RWPE1 (cell line): ENCODE measurements at regions of chr1 and their contacts with region 1.

Region 1: GRCh38 chr1:213110349-213111300 is 59.6 kb downstream of the RPS6KC1 start:
- DNase-seq: no peak
- H3K27ac ChIP-seq: no peak overlapping the region
- CTCF ChIP-seq: no peak

Region 2: DNA sequence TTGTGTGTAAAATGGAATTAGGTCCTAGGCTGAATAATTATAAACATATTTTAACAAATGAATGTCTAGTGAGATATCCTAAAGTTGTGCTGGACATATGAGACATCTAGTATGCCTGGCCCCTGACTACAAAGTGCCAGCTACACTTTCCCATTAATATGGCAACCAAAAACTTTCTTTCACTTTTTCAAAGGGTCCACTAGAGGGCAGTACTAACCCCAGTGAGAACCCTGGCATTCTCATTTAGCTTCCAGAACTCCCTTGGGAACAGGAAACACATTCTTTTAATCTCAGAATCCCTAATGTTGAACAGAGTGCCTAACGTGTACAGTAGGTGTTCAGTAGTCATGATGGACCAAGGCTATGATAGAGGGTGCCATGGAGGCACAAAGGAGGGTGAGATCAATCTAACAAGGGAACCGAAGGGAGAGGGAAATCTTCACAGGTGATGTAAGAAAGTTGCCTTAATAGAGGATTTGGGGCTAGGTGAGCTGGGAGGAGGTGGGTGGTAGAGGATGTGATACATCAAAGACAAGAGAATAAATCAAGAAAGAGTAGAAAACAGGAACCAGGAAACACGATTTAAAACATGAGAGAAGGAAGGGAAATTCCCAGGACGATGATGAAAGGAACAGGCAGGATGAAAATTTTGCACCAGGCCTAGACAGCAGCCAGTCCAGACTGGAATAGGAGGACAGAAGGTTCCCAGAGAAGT is 360.6 kb before region 1 on chr1:
- CTCF ChIA-PET with region 1: no interaction called
- POLR2A ChIA-PET with region 1: no interaction called
- DNase-seq: peak; percentile 61
- H3K27ac ChIP-seq: no peak overlapping the region
- CTCF ChIP-seq: peak; percentile 69

Region 3: GRCh38 chr1:213061263-213061662 is 49.4 kb before region 1 on chr1:
- CTCF ChIA-PET with region 1: no interaction called
- POLR2A ChIA-PET with region 1: no interaction called
- DNase-seq: no peak
- H3K27ac ChIP-seq: no peak overlapping the region
- CTCF ChIP-seq: no peak

Region 4: DNA sequence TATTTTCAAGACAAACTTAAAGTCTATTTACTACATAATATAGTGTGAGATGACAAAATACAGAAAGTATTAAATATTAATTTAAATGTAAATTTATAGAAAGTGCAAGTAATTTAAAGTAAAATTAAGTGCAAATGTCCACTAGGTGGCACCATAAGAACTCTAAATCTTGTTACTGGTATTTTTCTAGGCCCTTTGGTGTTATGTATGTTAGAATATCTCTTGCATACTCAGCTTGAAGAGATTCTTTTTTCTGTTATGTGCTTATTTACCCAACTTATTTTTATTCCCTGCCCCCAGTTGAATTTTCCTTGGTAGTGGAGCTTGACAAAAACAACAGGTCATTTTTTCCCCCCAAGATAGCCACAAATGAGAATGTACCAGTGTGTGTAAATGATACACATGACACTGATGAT is 11.9 kb after region 1 on chr1:
- CTCF ChIA-PET with region 1: interaction called, 10 read pairs
- POLR2A ChIA-PET with region 1: interaction called, 3 read pairs
- DNase-seq: no peak
- H3K27ac ChIP-seq: no peak overlapping the region
- CTCF ChIP-seq: peak; percentile 56; the same call in 1 of the 2 replicates

Region 5: GRCh38 chr1:213211201-213211600 is 100.6 kb after region 1 on chr1:
- CTCF ChIA-PET with region 1: no interaction called
- POLR2A ChIA-PET with region 1: no interaction called
- DNase-seq: no peak
- H3K27ac ChIP-seq: no peak overlapping the region
- CTCF ChIP-seq: no peak